A673 (cell line): ENCODE measurements at regions of chr7 and their contacts with region 1.

Region 1: DNA sequence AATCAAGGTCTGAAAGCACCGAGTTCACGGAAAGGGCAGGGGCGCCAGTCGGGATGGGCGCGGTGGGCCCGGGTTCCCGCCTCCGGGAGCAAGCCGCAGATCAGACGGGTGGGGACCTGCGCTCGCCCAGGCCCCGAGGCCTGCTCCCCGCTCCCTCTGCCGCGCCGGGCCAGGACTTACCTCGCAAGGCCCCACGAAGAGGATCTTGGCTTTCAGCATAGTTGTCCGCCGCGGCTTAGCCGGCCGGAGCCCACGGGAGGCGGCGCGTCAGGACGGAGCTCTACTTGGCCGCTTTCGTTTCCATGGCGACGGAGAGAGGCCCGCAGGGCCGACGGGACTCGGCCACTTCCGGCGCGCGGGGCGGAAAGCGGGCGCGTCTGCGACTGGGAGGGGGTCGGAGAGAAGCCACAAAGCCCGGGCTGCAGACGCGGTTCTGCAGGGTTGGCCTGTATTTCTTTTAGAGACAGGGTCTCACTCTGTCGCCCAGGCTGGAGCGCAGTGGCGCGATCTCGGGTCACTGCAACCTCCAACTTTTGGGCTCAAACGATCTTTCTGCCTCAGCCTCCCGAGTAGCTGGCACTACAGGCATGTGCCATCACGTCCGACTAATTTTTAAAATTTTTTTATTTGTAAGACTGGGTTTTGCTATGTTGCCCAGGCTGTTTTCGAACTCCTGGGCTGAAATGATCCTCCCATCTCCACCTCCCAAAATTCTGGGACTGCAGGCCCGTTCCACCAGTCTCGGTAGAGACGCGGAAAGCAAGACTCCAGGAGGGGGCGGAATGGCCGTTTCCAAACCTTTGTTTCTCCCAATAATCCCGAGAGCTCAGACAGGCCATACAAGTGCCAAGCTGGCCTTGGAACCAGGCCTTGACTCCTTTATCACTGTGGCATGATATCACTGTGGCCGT is at the start of gene IFT22:
- DNase-seq: peak; percentile 96
- H3K4me3 ChIP-seq: peak within 1 kb of the TSS; percentile 97
- H3K27ac ChIP-seq: peak within 1 kb of the TSS; percentile 78
- H3K4me1 ChIP-seq: peaks cover 4% of the 10 kb centered on the region
- H3K27me3 ChIP-seq: no peaks in the 10 kb centered on the region
- CTCF ChIP-seq: peak; percentile 53
- total RNA-seq, gene IFT22: 41.9 and 47.6 TPM in 2 replicates

Region 2: GRCh38 chr7:101126651-101127280 is 195.0 kb before region 1 on chr7 and contains the start of gene SERPINE1:
- CTCF ChIA-PET with region 1: no interaction called
- POLR2A ChIA-PET with region 1: no interaction called
- intact Hi-C with region 1: no loop called
- DNase-seq: peak; percentile 93
- H3K4me3 ChIP-seq: peak within 1 kb of the TSS; percentile 26
- H3K27ac ChIP-seq: no peak within 1 kb of the TSS
- H3K4me1 ChIP-seq: peaks cover 18% of the 10 kb centered on the region
- H3K27me3 ChIP-seq: no peaks in the 10 kb centered on the region
- CTCF ChIP-seq: 0 out of 2 replicates have a peak, but pooled peaks have one; percentile 34
- total RNA-seq, gene SERPINE1: 4.7 and 5.3 TPM in 2 replicates

Region 3: DNA sequence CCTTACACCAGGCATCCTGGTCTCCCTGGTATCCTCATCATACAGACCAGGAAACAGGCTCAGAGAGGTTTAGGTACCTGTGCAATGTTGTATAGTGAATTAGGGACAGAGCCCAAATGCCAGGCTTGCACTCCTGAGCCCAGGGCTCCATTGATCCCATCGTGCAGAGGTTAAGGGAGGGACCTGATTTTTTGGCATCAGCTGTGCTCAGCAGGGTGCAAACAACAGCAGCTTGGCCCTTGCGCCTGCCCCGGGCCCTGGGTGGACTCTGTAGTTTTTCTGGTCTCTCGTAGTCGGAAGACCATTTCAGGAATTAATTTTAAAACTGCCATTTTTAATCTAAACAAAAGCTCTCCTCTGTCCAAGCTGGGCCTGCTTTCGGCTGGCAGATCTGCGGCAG is 120.1 kb after region 1 on chr7:
- CTCF ChIA-PET with region 1: interaction called, 3 read pairs
- POLR2A ChIA-PET with region 1: no interaction called
- intact Hi-C with region 1: loop called (anchors 2 kb)
- DNase-seq: no peak
- H3K4me3 ChIP-seq: no peak overlapping the region
- H3K27ac ChIP-seq: no peak overlapping the region
- H3K4me1 ChIP-seq: no peaks in the 10 kb centered on the region
- H3K27me3 ChIP-seq: no peaks in the 10 kb centered on the region
- CTCF ChIP-seq: no peak

Region 4: DNA sequence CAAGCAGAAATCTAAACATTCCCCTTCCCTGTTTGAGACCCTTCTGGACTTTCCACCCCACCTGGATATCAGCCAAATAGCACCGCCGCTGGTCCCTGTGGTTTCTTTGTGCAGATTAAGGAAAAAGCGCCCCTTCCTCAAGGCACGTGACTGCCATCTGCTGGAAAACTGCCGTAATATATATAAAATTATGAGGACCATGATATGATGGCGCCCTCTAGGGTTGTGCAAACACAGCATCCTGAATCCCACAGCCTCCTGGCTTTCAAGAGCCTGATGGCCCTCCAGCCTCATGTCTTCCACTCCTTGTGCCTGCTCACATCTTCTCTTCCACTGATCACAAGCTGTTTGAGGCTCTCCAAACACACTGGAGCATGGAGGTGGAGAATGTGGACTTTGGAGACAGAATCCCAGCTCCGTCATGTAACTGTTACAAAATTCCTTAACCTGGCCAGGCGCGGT is 186.1 kb after region 1 on chr7:
- CTCF ChIA-PET with region 1: no interaction called
- POLR2A ChIA-PET with region 1: no interaction called
- intact Hi-C with region 1: loop called (anchors 10 kb)
- DNase-seq: peak; percentile 86
- H3K4me3 ChIP-seq: no peak overlapping the region
- H3K27ac ChIP-seq: no peak overlapping the region
- H3K4me1 ChIP-seq: no peaks in the 10 kb centered on the region
- H3K27me3 ChIP-seq: no peaks in the 10 kb centered on the region
- CTCF ChIP-seq: peak; percentile 98